B cell (primary cell): ENCODE measurements at regions of chr17 and their contacts with region 1.

Region 1: GRCh38 chr17:79933863-79934652 is 94.8 kb upstream of the CBX4 start:
- DNase-seq: peak; percentile 65
- ATAC-seq: peak; percentile 25
- H3K4me3 ChIP-seq: no peak overlapping the region
- H3K4me3 Mint-ChIP-seq: peak overlapping the region; percentile 59
- H3K27ac ChIP-seq: no peak overlapping the region
- H3K27ac Mint-ChIP-seq: peak overlapping the region; percentile 76
- H3K4me1 ChIP-seq: peaks cover 74 to 90% of the 10 kb centered on the region in 2 donors
- H3K4me1 Mint-ChIP-seq: peaks cover 80% of the 10 kb centered on the region
- H3K27me3 ChIP-seq: peaks cover 0 to 28% (median 12%) of the 10 kb centered on the region in 4 experiments
- H3K27me3 Mint-ChIP-seq: peaks cover 14% of the 10 kb centered on the region
- CTCF ChIP-seq: no peak

Region 2: DNA sequence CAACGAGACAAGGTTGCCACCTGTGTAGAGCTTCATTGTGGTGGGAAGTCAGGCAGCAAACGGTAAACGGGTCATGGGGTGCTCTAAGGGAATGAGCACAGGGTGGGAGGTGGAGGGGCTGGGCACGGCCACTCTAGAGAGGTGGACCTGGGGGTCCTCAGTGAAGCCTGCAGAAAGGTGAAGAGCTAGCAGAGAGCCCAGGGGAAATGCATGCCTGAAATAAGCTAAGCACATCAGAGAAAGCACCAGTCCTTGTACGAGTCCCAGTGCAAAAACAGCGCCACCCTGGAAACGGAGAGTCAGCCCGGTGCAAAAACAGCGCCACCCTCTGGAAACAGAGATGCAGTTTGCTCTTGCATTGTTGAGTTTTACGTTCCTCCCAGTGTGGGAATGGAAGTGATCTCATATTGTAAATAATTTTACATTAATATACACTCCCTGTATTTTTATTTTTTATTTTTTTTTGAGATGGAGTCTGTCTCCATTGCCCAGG is 36.6 kb after region 1 on chr17:
- CTCF ChIA-PET with region 1: interaction called, 15 read pairs
- POLR2A ChIA-PET with region 1: no interaction called
- intact Hi-C with region 1: no loop called
- DNase-seq: peak; percentile 77
- ATAC-seq: peak; percentile 45
- H3K4me3 ChIP-seq: no peak overlapping the region
- H3K4me3 Mint-ChIP-seq: no peak overlapping the region
- H3K27ac ChIP-seq: no peak overlapping the region
- H3K27ac Mint-ChIP-seq: peak overlapping the region; percentile 26
- H3K4me1 ChIP-seq: peaks cover 22 to 24% of the 10 kb centered on the region in 2 donors
- H3K4me1 Mint-ChIP-seq: peaks cover 30% of the 10 kb centered on the region
- H3K27me3 ChIP-seq: no peaks in the 10 kb centered on the region
- H3K27me3 Mint-ChIP-seq: no peaks in the 10 kb centered on the region
- CTCF ChIP-seq: peak; percentile 64

Region 3: GRCh38 chr17:79997011-79997660 is 63.1 kb after region 1 on chr17:
- CTCF ChIA-PET with region 1: interaction called, 3 read pairs
- POLR2A ChIA-PET with region 1: no interaction called
- intact Hi-C with region 1: loop called (anchors 2 kb)
- DNase-seq: peak; percentile 90
- ATAC-seq: peak; percentile 98
- H3K4me3 ChIP-seq: peak overlapping the region; percentile 1 to 45 (median 19)
- H3K4me3 Mint-ChIP-seq: peak overlapping the region; percentile 80
- H3K27ac ChIP-seq: peak overlapping the region; percentile 71 to 81
- H3K27ac Mint-ChIP-seq: peak overlapping the region; percentile 95
- H3K4me1 ChIP-seq: peaks cover 32 to 40% of the 10 kb centered on the region in 2 donors
- H3K4me1 Mint-ChIP-seq: peaks cover 41% of the 10 kb centered on the region
- H3K27me3 ChIP-seq: peaks cover 0 to 11% (median 0%) of the 10 kb centered on the region in 4 experiments
- H3K27me3 Mint-ChIP-seq: peaks cover 5% of the 10 kb centered on the region
- CTCF ChIP-seq: no peak